ENCODE measurements at regions of chr6 and their contacts with region 1.

Region 1: GRCh38 chr6:31546962-31547726 is at the start of gene NFKBIL1:
- DNase-seq: peak; percentile 96
- H3K4me3 Mint-ChIP-seq: peak within 1 kb of the TSS; percentile 88
- H3K27ac Mint-ChIP-seq: peak within 1 kb of the TSS; percentile 94
- H3K4me1 Mint-ChIP-seq: peaks cover 43% of the 10 kb centered on the region
- H3K27me3 Mint-ChIP-seq: no peaks in the 10 kb centered on the region
- total RNA-seq, gene NFKBIL1: 20.4 to 20.6 TPM

Region 2: GRCh38 chr6:31493875-31494694 is 53.1 kb before region 1 on chr6:
- CTCF ChIA-PET with region 1: interaction called, 5 read pairs
- intact Hi-C with region 1: loop called (anchors 1 kb)
- DNase-seq: peak; percentile 87
- H3K4me3 Mint-ChIP-seq: peak overlapping the region; percentile 89
- H3K27ac Mint-ChIP-seq: peak overlapping the region; percentile 90
- H3K4me1 Mint-ChIP-seq: peaks cover 43% of the 10 kb centered on the region
- H3K27me3 Mint-ChIP-seq: no peaks in the 10 kb centered on the region

Region 3: DNA sequence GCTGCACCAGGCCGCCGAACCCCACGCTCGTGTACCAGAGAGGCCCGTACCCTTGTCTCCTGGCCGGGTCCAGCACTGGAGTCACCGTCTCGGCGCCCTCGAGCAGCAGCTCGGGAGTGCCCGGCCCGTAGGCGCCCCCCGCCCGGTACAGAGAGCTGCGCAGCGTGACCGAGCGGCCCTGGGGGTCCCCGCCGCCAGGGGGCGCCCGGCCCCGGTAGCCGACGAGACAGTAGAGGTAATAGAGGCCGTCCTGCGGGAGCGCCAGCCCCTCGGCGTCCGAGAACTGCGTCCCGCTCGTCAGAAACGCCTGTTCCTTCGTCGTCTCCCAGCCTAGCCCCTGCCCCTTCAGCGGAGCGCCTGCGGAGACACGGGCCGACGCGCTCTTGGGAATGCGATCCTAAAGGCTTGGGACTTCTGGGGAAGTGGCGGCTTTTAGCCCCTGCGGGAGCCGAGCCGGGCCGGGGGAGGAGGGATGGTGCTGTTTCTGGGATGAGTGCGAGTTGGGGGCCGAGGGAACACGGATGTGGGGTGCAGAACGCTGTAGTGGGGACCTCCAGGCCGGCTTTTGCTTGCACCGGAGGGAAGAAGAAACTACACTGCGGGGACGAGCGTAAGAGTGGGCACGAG is 33.8 kb after region 1 on chr6:
- CTCF ChIA-PET with region 1: interaction called, 442 read pairs
- intact Hi-C with region 1: loop called (anchors 1 kb)
- DNase-seq: peak; percentile 90
- H3K4me3 Mint-ChIP-seq: peak overlapping the region; percentile 99
- H3K27ac Mint-ChIP-seq: peak overlapping the region; percentile 99
- H3K4me1 Mint-ChIP-seq: peaks cover 50% of the 10 kb centered on the region
- H3K27me3 Mint-ChIP-seq: no peaks in the 10 kb centered on the region

Region 4: GRCh38 chr6:31619805-31620585 is 72.9 kb after region 1 on chr6:
- CTCF ChIA-PET with region 1: interaction called, 5 read pairs
- intact Hi-C with region 1: loop called (anchors 1 kb)
- DNase-seq: peak; percentile 99
- H3K4me3 Mint-ChIP-seq: peak overlapping the region; percentile 83
- H3K27ac Mint-ChIP-seq: peak overlapping the region; percentile 97
- H3K4me1 Mint-ChIP-seq: peaks cover 55% of the 10 kb centered on the region
- H3K27me3 Mint-ChIP-seq: no peaks in the 10 kb centered on the region

Region 5: DNA sequence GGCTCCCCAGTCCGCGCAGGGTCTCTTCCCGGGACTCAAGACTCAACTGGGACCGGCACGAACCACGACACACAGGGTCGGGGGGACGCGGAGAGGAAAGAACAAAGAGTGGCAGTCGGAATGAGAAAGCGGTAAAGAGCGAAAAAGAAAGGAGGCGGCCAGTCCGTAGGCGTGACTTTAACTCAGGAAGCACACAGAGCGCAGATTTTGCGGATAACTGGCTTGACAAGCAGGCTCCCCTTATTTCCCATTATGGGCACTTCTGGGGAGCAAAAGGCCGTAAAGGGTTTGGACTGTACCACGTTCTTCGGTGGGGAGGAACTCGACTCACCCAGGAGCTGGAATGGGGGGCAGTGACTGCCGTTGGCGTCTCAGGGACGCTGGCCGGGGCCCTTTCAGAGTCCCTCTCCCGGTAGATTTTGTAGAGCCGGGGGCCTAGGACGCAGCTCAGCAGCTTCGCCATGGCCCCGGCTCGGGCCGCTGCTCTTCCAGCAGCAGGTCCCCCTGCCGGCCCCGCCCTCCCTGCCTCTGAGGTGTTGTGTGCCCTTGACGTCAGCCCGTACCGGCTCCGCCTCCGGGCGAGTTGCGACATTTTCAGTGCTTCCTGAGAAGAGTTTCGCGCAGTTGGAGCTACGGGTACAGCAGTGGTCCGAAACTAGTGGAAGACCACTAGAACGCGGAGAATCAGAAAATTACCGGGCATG is 155.8 kb after region 1 on chr6 and contains the start of gene ABHD16A:
- CTCF ChIA-PET with region 1: interaction called, 3 read pairs
- intact Hi-C with region 1: loop called (anchors 1 kb)
- DNase-seq: peak; percentile 99
- H3K4me3 Mint-ChIP-seq: peak within 1 kb of the TSS; percentile 99
- H3K27ac Mint-ChIP-seq: peak within 1 kb of the TSS; percentile 97
- H3K4me1 Mint-ChIP-seq: peaks cover 22% of the 10 kb centered on the region
- H3K27me3 Mint-ChIP-seq: no peaks in the 10 kb centered on the region
- total RNA-seq, gene ABHD16A: 19.9 to 22.5 TPM

Region 6: DNA sequence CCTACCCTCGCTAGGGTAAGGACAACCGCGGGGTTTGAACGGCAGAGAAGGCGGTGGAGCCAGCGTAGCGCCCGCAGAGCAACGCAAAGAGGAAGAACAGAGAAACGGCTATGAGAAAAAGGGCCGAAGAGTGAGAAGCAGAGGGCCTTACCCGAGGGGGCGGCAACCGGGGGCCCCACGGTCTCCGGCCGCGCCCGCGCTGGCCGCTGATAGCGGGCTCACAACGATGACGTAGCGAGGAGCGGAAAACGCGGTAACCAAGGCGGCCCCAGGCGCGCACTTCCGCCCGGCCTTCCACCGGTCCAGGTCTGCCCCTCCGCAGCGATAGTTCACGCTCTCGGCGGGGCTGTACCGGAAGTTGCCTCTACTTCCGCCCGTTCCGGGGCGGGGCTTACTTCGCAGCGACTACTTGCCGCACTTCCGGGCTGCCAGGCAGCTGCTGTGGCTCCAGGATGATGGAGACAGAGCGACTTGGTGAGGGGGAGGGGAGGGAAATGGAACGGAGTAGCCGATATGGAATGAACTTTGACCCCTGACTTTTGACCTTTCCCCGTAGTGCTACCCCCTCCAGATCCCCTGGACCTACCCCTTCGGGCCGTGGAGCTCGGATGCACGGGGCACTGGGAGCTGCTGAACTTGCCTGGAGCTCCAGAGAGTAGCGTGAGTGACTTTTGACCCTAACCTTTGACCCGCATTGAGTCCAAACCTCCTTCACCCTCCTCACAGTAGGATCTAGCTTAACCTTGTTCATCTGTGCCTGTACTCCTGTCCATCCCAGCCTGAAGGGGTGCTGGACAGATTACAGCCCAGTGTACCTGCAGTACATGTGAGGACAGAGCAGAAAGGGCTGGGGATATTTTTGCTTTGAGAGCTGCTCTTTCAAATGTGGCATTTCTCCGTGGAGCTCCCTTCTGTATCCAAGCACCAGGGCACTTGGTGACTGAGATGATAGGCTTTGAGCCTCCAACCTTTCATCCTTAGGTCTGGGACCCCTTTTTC is 411.9 kb after region 1 on chr6 and contains the starts of genes NELFE and SKIC2:
- CTCF ChIA-PET with region 1: no interaction called
- intact Hi-C with region 1: loop called (anchors 2 kb)
- DNase-seq: peak; percentile 99
- H3K4me3 Mint-ChIP-seq: peak within 1 kb of the TSS; percentile 95
- H3K27ac Mint-ChIP-seq: peak within 1 kb of the TSS; percentile 94
- H3K4me1 Mint-ChIP-seq: peaks cover 41% of the 10 kb centered on the region
- H3K27me3 Mint-ChIP-seq: no peaks in the 10 kb centered on the region
- total RNA-seq, gene NELFE: 83.2 to 87.4 TPM
- total RNA-seq, gene SKIC2: 93.6 to 101 TPM

Measured in activated naive CD4-positive, alpha-beta T cell treated with anti-CD3 and anti-CD28 coated beads for 36 hours (primary cell).